ENCODE measurements at regions of chr6 and their contacts with region 1.

Region 1: DNA sequence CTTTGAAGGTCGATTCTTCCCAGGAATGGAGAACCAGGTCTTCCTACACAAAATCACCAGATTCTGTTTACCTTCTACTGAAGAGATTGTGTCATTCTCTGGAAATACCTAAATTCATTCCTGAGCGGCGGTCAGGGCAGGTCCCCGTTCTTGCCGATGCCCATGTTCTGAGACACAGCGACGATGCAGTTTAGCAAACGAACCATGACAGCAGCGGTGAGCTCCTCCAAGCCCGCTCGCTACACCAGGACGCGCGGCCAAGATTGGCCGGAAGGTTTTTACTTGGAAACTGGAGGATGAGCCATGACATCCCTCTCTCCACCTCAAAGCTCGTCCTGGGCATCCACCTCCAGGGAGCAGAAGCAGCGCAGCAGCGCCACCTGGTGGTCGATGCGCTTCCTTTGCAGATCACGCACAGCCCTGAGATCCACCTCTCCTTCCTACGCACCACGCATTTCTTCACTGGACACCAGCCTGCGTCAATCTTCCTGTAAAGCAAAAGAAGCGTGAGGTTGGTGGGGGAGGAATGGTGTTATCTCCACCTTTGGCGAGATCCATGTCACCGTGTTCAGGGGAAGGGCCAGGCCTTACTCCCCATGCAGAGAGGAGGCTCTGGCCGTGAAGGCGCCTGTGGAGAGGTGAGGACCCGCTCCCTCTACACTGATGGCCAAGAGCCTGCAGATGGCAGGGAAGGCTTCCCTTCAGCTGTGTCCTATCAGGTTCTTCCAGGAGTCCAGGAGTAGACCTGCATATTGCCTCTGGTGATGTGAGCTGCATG is 9.9 kb upstream of the HLA-B start:
- DNase-seq: peak; percentile 95
- ATAC-seq: peak; percentile 100

Region 2: DNA sequence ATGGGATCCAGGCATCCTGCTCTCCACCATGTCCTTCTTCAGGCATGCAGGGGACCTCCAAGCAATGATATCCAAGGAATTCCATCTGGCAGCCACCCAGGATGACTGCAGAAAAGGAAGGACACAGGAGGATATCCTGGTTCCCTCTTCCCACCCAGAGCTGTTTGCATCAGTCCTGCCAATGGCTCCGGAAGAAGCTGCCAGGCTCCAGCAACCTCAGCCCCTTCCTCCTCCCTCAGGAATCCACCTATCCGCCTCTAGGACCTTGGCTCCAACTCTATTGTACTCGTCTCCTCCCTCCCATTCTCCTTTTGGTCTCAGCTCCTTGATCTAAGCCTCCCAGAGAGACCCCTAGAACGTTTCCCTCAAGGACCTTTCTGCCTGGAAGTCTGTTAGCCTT is 227.3 kb before region 1 on chr6:
- intact Hi-C with region 1: loop called (anchors 5 kb)
- DNase-seq: no peak
- ATAC-seq: no peak

Region 3: DNA sequence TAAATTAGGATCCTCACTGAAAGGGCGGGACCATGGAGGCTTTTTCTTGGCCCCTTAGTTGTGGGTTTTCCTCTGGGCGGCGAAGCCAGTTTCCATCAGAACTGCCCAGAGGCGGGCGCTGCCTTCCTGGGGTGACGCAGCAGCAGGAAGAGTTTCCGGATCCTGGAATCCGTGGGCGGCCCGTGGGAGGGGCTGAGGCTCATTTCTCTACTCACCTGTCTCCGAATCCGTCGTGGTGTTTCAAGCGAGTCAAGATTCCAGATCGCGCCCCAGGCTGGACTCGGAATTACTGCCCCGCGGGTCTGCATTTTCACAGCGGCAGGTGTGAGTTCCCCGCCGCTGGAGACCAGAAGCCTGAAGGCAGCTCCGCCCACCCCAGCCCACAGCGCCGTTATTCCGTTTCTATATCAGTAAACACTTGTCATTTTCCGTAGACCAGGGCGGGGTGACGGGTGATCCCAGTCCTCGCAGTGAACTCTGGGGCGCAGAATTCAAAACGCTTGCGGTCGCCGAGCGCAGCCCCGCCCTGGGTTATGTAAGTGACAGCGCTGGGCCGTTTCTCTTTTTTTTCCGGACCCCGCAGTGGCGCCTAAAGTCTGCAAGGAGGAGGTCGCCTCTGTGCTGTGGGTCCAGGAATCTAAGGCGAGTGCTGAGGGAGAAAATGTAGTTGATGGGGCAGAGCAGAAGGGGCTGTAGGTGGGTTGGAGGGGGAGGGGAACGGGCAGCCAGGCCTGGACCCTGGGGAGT is 169.2 kb before region 1 on chr6:
- intact Hi-C with region 1: loop called (anchors 2 kb)
- DNase-seq: peak; percentile 96
- ATAC-seq: peak; percentile 92

Region 4: GRCh38 chr6:31521835-31522234 is 155.0 kb after region 1 on chr6:
- intact Hi-C with region 1: no loop called
- DNase-seq: no peak
- ATAC-seq: no peak